ENCODE measurements at regions of chr4 and their contacts with region 1.

Region 1: GRCh38 chr4:186137196-186137794 is 32.8 kb downstream of the FAM149A start:
- DNase-seq: no peak
- H3K4me3 ChIP-seq: peak overlapping the region in 33 of 59 donors; percentile 3 to 50 (median 31)
- H3K27ac ChIP-seq: peak overlapping the region in 1 of 59 donors; percentile 7
- H3K27me3 ChIP-seq: no peaks in the 10 kb centered on the region
- CTCF ChIP-seq: peak; percentile 55 to 82 (median 72)

Region 2: GRCh38 chr4:186067757-186068385 is 69.4 kb before region 1 on chr4:
- intact Hi-C with region 1: loop called (anchors 5 kb)
- DNase-seq: peak in 7 of 10 donors; percentile 34 to 70 (median 61)
- H3K4me3 ChIP-seq: peak overlapping the region in 58 of 59 donors; percentile 19 to 74 (median 56)
- H3K27ac ChIP-seq: peak overlapping the region in 12 of 59 donors; percentile 4 to 79 (median 54)
- H3K27me3 ChIP-seq: peaks cover 0 to 7% (median 0%) of the 10 kb centered on the region in 45 donors
- CTCF ChIP-seq: peak in 55 of 56 donors; percentile 27 to 76 (median 56)

Region 3: GRCh38 chr4:186266729-186267456 is 129.6 kb after region 1 on chr4:
- intact Hi-C with region 1: no loop called
- DNase-seq: no peak
- H3K4me3 ChIP-seq: peak overlapping the region in 1 of 59 donors; percentile 18
- H3K27ac ChIP-seq: no peak overlapping the region
- H3K27me3 ChIP-seq: peaks cover 0 to 23% (median 0%) of the 10 kb centered on the region in 45 donors
- CTCF ChIP-seq: no peak

Region 4: GRCh38 chr4:186534056-186534455 is 396.8 kb after region 1 on chr4:
- intact Hi-C with region 1: no loop called
- DNase-seq: no peak
- H3K4me3 ChIP-seq: no peak overlapping the region
- H3K27ac ChIP-seq: no peak overlapping the region
- H3K27me3 ChIP-seq: no peaks in the 10 kb centered on the region
- CTCF ChIP-seq: no peak